CD4-positive, alpha-beta T cell (primary cell): ENCODE measurements at regions of chr20 and their contacts with region 1.

Region 1: DNA sequence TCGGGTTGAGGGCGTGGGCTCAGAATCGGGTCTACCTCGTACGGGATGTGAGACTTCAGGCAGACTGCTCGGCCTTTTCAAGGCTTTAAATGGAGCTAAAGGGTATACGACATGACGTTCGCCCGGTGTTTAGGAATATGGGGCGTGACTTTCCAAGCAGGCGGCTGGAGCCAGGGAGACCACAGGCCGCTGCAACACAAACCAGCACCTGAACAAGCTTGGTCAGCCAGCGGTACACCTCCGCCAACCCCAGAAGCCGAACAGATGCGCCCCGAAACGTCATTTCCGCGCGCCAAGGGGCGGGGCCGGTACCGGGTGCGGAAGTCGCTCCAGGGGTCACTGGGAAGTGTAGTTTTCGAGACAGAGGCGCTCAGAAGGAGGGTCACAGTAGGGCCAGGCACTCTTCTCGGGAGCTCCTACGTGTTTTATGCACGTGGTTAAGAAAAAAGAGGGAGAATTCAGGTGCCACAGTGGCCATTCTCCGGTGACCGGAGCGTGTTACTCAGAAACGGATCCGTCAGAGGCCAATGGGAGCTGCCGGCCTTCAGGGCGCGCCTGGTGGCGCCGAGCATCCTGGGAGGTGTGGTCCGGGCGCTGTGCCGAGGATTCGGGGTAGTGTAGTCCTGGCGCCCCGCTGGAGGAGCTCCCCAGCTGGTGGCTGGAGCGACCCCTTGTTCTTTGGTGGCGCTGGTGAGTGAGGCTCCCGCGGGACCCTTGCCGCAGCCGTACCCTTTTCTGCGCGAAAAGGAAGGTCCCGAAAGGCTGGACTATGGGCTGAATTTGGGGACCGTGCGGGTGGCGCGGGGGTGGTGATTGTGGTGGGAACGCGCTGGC is at the start of gene ZNF133:
- DNase-seq: peak; percentile 90 to 99 (median 97)
- ATAC-seq: peak; percentile 91
- H3K4me3 ChIP-seq: peak within 1 kb of the TSS; percentile 90
- H3K4me3 Mint-ChIP-seq: peak within 1 kb of the TSS; percentile 96
- H3K27ac ChIP-seq: peak within 1 kb of the TSS; percentile 95 to 98
- H3K27ac Mint-ChIP-seq: peak within 1 kb of the TSS; percentile 98
- H3K4me1 ChIP-seq: peaks cover 23% of the 10 kb centered on the region
- H3K4me1 Mint-ChIP-seq: peaks cover 49% of the 10 kb centered on the region
- H3K27me3 ChIP-seq: peaks cover 8 to 17% of the 10 kb centered on the region in 2 experiments
- H3K27me3 Mint-ChIP-seq: peaks cover 23% of the 10 kb centered on the region
- CTCF ChIP-seq: no peak
- total RNA-seq, gene ZNF133: 3.3 to 4.1 TPM

Region 2: GRCh38 chr20:16573001-16573965 is 1714.8 kb before region 1 on chr20 and contains the start of gene KIF16B:
- CTCF ChIA-PET with region 1: no interaction called
- POLR2A ChIA-PET with region 1: no interaction called
- intact Hi-C with region 1: loop called in 1 of 2 experiments (anchors 5 kb)
- DNase-seq: peak; percentile 58 to 89 (median 76)
- ATAC-seq: peak; percentile 81
- H3K4me3 ChIP-seq: peak within 1 kb of the TSS; percentile 78
- H3K4me3 Mint-ChIP-seq: peak within 1 kb of the TSS; percentile 92
- H3K27ac ChIP-seq: no peak within 1 kb of the TSS
- H3K27ac Mint-ChIP-seq: peak within 1 kb of the TSS; percentile 64
- H3K4me1 ChIP-seq: peaks cover 34% of the 10 kb centered on the region
- H3K4me1 Mint-ChIP-seq: peaks cover 49% of the 10 kb centered on the region
- H3K27me3 ChIP-seq: no peaks in the 10 kb centered on the region
- H3K27me3 Mint-ChIP-seq: no peaks in the 10 kb centered on the region
- CTCF ChIP-seq: no peak
- total RNA-seq, gene KIF16B: 10.2 to 11.5 TPM

Region 3: DNA sequence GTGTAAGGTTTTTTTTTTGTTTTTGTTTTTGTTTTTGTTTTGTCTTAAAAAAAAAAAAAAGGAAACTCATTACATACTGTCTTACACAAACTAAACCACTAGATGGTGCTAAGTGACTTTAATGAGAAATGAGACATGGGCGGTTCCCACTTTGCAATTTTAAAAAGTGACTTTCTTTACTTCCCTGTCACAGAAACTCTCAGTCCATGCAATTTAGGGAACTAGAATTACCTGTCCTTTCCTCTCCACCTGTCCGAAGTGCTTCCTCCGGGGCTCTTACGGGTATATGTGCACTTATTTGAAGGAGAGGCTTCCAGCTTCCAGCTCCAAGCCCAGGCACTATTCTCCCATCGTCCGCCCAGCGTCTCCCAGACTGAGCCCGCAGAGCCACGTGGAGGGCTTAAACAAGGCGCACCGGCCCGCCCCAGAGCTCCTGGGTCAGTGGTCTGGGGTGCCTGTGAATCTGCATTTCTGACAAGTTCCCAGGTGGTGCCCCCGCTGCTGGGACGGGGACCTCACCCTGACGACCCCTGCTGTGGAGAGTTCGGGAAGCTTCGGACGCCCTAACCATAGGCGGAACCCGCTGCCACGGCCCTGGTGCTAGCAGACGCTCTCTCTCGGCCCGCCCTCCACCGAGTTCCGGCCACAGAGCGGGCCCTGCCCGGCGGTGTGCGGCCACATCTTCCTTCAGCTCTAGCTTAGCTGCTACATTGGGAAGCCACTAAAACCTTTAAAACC is 783.1 kb before region 1 on chr20:
- CTCF ChIA-PET with region 1: no interaction called
- POLR2A ChIA-PET with region 1: no interaction called
- intact Hi-C with region 1: loop called in 1 of 2 experiments (anchors 5 kb)
- DNase-seq: peak in 13 of 14 experiments; percentile 8 to 80 (median 25)
- ATAC-seq: peak; percentile 80
- H3K4me3 ChIP-seq: peak overlapping the region; percentile 69
- H3K4me3 Mint-ChIP-seq: peak overlapping the region; percentile 93
- H3K27ac ChIP-seq: peak overlapping the region; percentile 4 to 48
- H3K27ac Mint-ChIP-seq: peak overlapping the region; percentile 83
- H3K4me1 ChIP-seq: peaks cover 41% of the 10 kb centered on the region
- H3K4me1 Mint-ChIP-seq: peaks cover 32% of the 10 kb centered on the region
- H3K27me3 ChIP-seq: no peaks in the 10 kb centered on the region
- H3K27me3 Mint-ChIP-seq: no peaks in the 10 kb centered on the region
- CTCF ChIP-seq: peak; percentile 69

Region 4: DNA sequence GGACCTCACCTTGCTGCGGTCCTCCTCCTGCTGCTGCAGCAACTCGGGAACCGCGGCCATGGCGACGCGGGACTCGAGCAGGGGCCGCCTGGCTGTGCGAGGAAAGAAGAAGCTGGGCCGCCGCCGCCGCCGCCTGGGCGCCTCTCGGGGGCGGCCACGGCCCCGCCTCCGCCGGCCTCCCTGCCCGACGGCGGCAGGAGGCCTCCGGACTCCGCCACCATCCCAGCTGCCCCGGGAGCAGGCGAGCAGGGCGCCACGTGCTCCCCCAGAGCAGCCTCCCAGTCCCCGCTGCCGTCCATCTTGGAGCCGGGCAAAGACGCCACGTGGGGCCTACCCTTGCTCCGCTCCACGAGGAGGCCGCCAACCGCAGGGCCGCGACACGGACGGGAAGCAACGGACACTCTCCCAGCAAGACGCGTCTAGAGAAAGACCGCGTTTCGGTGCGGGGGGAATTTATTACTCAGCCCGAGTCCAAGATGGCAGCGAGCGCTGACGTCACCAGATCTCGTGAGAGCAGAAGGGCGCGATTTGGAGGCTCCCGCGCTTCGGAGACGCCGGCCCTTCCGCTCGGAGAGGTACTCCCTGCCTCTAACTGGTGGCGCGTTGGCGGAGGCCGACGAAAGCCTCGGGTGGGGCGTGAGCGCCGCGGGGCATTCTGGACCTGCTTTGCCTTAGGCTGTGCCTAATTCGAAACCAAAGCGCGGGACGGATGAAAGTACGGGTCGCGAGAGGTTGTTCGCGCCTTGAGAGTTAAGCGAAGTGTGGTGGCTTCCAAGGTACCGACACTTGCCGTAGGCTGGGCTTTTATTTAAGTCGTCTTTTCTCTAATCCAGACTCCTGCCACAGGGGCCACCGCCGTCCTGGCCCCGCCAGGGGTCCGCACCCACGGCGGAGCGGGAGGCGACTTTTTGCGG is 319.5 kb before region 1 on chr20 and contains the starts of genes MGME1 and SNX5:
- CTCF ChIA-PET with region 1: no interaction called
- POLR2A ChIA-PET with region 1: interaction called, 8 read pairs
- intact Hi-C with region 1: loop called (anchors 1 to 2 kb)
- DNase-seq: peak; percentile 96 to 100 (median 98)
- ATAC-seq: peak; percentile 91
- H3K4me3 ChIP-seq: peak within 1 kb of the TSS; percentile 69
- H3K4me3 Mint-ChIP-seq: peak within 1 kb of the TSS; percentile 97
- H3K27ac ChIP-seq: peak within 1 kb of the TSS; percentile 92 to 99
- H3K27ac Mint-ChIP-seq: peak within 1 kb of the TSS; percentile 92
- H3K4me1 ChIP-seq: peaks cover 46% of the 10 kb centered on the region
- H3K4me1 Mint-ChIP-seq: peaks cover 82% of the 10 kb centered on the region
- H3K27me3 ChIP-seq: no peaks in the 10 kb centered on the region
- H3K27me3 Mint-ChIP-seq: no peaks in the 10 kb centered on the region
- CTCF ChIP-seq: no peak
- total RNA-seq, gene MGME1: 4.5 to 4.6 TPM
- total RNA-seq, gene SNX5: 58.3 to 60.3 TPM

Region 5: GRCh38 chr20:18466894-18467730 is 179.0 kb after region 1 on chr20 and contains the starts of genes DZANK1 and POLR3F:
- CTCF ChIA-PET with region 1: no interaction called
- POLR2A ChIA-PET with region 1: interaction called, 21 read pairs
- intact Hi-C with region 1: loop called (anchors 1 to 2 kb)
- DNase-seq: peak; percentile 84 to 96 (median 90)
- ATAC-seq: peak; percentile 89
- H3K4me3 ChIP-seq: peak within 1 kb of the TSS; percentile 95
- H3K4me3 Mint-ChIP-seq: peak within 1 kb of the TSS; percentile 96
- H3K27ac ChIP-seq: peak within 1 kb of the TSS; percentile 77 to 91
- H3K27ac Mint-ChIP-seq: peak within 1 kb of the TSS; percentile 96
- H3K4me1 ChIP-seq: peaks cover 17% of the 10 kb centered on the region
- H3K4me1 Mint-ChIP-seq: peaks cover 39% of the 10 kb centered on the region
- H3K27me3 ChIP-seq: no peaks in the 10 kb centered on the region
- H3K27me3 Mint-ChIP-seq: no peaks in the 10 kb centered on the region
- CTCF ChIP-seq: no peak
- total RNA-seq, gene DZANK1: 1.8 to 1.9 TPM
- total RNA-seq, gene POLR3F: 7.9 to 8.8 TPM

Region 6: GRCh38 chr20:18566892-18567742 is 279.0 kb after region 1 on chr20 and contains the start of gene SMIM26:
- CTCF ChIA-PET with region 1: no interaction called
- POLR2A ChIA-PET with region 1: interaction called, 10 read pairs
- intact Hi-C with region 1: loop called (anchors 1 to 2 kb)
- DNase-seq: peak; percentile 90 to 97 (median 94)
- ATAC-seq: peak; percentile 99
- H3K4me3 ChIP-seq: peak within 1 kb of the TSS; percentile 91
- H3K4me3 Mint-ChIP-seq: peak within 1 kb of the TSS; percentile 99
- H3K27ac ChIP-seq: peak within 1 kb of the TSS; percentile 82 to 94
- H3K27ac Mint-ChIP-seq: peak within 1 kb of the TSS; percentile 100
- H3K4me1 ChIP-seq: peaks cover 20% of the 10 kb centered on the region
- H3K4me1 Mint-ChIP-seq: peaks cover 28% of the 10 kb centered on the region
- H3K27me3 ChIP-seq: no peaks in the 10 kb centered on the region
- H3K27me3 Mint-ChIP-seq: no peaks in the 10 kb centered on the region
- CTCF ChIP-seq: no peak
- total RNA-seq, gene SMIM26: 78.7 to 79.8 TPM

Region 7: DNA sequence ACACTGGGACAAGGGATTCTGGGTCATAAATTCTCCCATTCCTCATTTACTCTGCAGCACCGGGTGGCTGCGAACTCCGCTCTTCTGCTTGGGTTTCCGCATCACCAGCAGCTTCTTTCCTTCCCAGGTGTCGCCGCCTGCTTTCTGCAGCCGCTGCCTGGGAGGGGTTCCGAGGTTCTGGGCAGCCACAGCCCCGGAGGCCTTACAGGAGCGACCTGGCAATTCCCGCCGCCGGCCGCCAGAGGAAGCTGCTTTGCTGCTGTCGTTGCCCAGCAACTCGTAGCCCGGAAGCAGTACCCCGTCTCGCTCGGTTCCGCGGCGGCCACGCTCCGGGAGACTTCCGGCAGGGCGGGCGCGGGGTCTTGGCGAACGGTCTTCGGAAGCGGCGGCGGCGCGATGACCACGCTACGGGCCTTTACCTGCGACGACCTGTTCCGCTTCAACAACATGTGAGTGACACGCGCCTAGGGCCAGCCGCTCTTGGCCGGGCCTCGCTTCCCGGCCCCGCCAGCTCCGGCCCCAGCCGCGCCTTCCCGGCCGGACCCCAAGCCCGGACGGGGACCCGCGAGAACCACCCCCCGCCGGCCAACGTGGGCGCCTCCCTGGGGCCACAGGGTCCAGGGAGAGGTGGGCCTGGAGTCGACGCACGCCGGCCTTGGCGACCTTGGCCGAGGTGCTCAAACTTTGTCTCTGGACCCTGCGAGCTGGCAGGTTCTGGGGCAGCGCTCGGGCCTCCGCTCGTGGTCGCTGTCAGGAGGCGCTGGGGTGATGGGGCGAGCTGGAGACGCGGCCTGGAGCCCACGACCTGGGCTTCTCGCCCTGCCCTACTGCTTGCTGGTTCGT is 1729.1 kb after region 1 on chr20 and contains the start of gene NAA20:
- CTCF ChIA-PET with region 1: no interaction called
- POLR2A ChIA-PET with region 1: no interaction called
- intact Hi-C with region 1: loop called in 1 of 2 experiments (anchors 10 kb)
- DNase-seq: peak; percentile 82 to 95 (median 86)
- ATAC-seq: peak; percentile 98
- H3K4me3 ChIP-seq: peak within 1 kb of the TSS; percentile 76
- H3K4me3 Mint-ChIP-seq: peak within 1 kb of the TSS; percentile 95
- H3K27ac ChIP-seq: peak within 1 kb of the TSS; percentile 32 to 47
- H3K27ac Mint-ChIP-seq: peak within 1 kb of the TSS; percentile 88
- H3K4me1 ChIP-seq: peaks cover 38% of the 10 kb centered on the region
- H3K4me1 Mint-ChIP-seq: peaks cover 54% of the 10 kb centered on the region
- H3K27me3 ChIP-seq: no peaks in the 10 kb centered on the region
- H3K27me3 Mint-ChIP-seq: no peaks in the 10 kb centered on the region
- CTCF ChIP-seq: peak; percentile 75
- total RNA-seq, gene NAA20: 18.8 to 18.9 TPM